ENCODE measurements at regions of chr6 and their contacts with region 1.

Region 1: DNA sequence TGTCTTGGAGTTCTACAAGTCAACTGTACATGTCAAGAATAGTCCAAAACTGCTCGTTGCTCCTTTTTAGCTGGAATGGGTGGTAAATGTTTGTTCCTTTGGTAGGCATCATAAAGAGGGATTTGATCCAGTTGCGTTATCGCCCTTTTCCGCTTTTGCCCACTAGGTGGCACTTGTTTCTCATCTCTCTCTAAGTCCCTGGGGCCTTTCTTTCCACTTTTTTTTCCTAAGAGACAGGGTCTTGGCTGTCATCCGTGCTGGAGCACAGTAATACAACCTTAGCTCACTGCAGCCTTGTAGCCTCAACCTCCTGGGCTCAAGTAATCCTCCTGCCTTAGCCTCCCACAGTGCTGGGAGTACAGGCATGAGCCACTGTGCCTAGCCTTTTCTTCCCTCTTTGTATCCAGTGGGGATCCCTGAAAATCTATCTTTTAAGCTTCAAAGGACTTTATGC is 20.7 kb downstream of the GTPBP2 start:
- DNase-seq: peak in 3 of 5 donors; percentile 40 to 66 (median 63)
- ATAC-seq: peak; percentile 51 to 56 (median 54)
- H3K4me3 ChIP-seq: no peak overlapping the region
- H3K27ac ChIP-seq: no peak overlapping the region
- H3K4me1 ChIP-seq: peaks cover 0 to 13% (median 0%) of the 10 kb centered on the region in 12 donors
- H3K27me3 ChIP-seq: no peaks in the 10 kb centered on the region
- CTCF ChIP-seq: peak; percentile 66 to 90 (median 78)
- POLR2A ChIP-seq: no peak

Region 2: GRCh38 chr6:44084231-44085014 is 476.1 kb after region 1 on chr6:
- intact Hi-C with region 1: loop called in 9 of 10 experiments (anchors 1 to 10 kb)
- DNase-seq: peak in 1 of 5 donors; percentile 84
- ATAC-seq: peak in 3 of 4 donors; percentile 59 to 87 (median 84)
- H3K4me3 ChIP-seq: no peak overlapping the region
- H3K27ac ChIP-seq: peak overlapping the region in 5 of 12 donors; percentile 24 to 76 (median 36)
- H3K4me1 ChIP-seq: peaks cover 0 to 30% (median 4%) of the 10 kb centered on the region in 12 donors
- H3K27me3 ChIP-seq: no peaks in the 10 kb centered on the region
- CTCF ChIP-seq: no peak
- POLR2A ChIP-seq: no peak